ENCODE measurements at regions of chr11 and their contacts with region 1.

Region 1: DNA sequence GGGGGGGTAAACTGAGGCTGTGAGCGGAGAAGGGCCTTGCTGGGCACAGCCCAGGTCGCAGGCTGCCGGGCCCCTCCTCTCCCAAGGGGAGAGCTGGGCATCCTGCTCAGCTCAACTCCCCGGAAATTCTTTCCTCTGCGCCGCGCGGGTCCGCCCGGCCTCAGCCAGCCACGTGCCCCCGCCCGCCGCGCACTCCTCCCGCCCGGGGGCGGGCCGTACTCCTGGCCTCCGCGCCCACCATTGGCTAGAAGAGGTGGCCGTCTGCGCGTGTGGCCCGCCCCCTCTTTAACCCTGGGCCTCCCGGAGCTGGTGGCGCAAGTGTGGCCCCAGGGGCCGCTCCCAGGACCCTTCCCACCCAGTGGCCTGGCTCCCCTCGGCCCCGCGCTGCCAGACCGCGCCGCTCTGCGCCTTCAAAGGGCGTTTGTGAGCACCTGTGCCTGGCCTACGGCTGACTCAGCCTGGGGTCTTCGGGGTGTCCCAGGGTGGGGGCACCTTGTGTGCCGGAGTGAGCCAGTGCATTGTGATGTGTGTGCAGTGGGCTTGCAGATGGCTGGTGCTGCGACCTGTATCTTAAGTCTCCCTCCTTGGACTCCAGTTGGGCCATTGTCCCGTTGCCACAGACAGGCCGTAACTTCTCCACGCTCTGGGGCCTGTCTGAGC is 2.0 kb downstream of the MRGPRF start:
- DNase-seq: no peak
- H3K4me3 ChIP-seq: peak overlapping the region; percentile 51
- H3K27me3 ChIP-seq: no peaks in the 10 kb centered on the region
- CTCF ChIP-seq: no peak

Region 2: DNA sequence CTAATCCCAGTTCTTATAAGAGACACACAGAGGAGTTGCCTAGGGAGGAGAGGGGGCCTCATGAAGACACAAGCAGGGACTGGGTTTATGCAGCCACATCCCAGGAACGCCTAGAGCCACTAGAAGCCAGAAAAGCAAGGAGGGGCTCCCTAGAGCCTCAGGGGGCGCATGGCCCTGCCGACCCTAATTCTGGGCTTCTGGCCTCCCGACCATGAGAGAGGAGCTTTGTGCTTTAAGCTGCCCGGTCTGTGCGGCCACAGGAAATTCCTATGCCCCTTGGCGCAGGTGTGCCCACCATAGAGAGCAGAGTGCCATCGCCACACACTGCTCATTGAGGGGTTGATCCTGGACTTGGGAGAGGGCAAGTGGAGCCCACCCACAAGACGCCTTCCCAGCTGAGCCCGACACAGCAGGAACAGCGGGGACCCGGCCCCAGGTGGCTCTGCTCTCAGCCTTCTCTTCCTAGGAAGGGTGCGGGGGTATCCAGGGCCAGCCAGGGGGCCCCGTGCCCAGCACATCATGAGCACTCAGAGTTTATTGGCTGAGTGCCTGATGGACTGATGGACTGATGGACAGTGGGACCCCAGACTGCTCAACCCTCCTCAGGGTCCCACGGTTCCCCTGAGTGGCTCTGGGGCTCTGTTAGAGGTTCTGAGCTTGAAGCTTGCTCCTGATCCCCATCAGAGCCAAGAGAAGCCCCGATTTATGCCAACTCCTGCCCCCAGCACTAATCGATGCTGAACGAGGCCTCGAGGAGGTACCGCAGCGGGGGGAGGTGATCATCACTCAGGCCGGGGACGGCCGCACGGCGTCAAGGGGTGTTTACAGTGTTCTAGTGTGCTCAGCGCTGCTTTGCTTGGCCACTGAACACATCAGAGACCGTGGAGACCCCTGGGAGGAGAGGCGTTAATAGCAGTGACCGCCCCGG is 16.9 kb before region 1 on chr11:
- CTCF ChIA-PET with region 1: no interaction called
- POLR2A ChIA-PET with region 1: no interaction called
- DNase-seq: no peak
- H3K4me3 ChIP-seq: no peak overlapping the region
- H3K27me3 ChIP-seq: peaks cover 11% of the 10 kb centered on the region
- CTCF ChIP-seq: no peak

Region 3: DNA sequence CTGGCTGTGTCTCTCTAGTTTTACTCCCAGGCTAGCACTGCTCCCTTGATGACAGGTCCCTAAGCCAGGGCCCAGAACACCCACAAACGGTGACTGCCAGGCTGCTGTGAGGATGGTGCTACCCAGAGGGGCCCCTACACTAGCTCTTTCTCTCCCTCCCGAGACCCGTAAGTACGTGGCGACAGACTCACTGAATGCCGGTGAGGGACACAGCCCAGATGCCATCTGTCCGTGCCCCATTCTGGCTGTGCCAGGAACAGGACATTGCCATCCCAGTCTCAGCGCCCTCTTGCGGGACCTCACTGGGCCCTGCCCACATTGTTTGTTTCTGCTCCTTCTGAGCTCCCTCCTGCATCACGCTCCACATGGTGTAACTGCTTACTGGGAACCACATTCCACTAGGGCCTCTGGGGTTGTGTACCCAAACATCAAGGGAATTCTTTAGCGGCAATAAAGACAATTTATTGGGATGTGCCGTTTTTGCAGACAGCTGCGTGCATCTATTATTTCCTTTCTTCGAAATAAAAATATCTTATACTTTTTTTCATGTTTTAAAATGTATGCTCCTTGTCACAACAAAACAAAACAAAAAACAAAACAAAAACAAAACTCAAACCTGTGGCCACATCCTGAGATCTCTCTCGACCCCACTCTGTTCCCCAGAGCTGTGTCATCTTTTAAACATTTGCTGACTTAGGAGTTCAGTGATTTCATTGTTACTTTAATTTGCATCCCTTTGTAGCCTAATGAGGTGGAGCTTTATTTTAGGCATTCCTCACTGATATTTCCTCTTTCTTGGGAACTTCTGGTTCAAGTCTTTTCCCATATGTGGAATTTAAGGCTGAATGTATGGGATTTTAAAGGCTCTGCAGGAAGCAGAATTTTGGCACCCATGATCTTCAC is 33.3 kb after region 1 on chr11:
- CTCF ChIA-PET with region 1: interaction called, 54 read pairs
- POLR2A ChIA-PET with region 1: no interaction called
- DNase-seq: peak; percentile 66
- H3K4me3 ChIP-seq: no peak overlapping the region
- H3K27me3 ChIP-seq: no peaks in the 10 kb centered on the region
- CTCF ChIP-seq: peak; percentile 87

Region 4: DNA sequence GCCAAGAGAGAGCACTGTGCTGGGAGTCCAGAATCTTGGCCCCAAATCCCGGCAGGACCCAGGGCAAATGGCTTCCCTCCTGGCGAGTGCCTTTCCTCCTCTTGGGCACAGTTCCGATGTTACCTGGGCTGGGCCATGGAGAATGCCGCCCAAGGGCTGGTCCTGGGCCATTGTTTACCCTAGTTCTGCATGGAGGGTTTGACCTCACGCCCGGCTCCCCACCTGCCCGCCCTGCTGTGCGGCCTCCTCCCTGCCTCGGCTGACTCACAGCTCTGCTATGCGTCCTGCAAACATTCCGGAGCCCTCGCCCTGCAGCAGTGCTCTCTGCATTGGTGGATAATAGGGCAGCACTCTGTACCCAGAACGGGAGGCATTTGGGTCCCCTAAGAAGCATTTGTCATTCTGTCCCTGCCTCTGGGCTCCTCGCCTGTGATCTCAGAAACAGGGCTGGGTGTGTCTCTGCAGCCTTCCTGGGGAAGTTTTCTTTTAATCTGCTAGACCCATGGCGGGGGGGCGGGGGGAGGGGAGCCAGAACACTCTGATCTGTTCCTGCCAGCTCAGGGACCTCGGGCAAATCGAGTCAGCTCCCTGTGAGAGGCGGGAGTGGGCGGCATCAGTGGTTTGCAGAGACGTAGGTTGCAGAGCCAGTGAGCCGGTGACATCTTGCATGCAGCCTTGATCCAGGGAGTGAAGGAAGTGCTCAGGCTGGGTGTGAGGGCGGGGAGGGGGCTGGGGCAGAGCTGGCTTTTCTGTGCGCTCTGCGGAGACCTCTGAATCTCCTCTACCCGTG is 111.7 kb after region 1 on chr11:
- CTCF ChIA-PET with region 1: no interaction called
- POLR2A ChIA-PET with region 1: no interaction called
- DNase-seq: no peak
- H3K4me3 ChIP-seq: no peak overlapping the region
- H3K27me3 ChIP-seq: no peaks in the 10 kb centered on the region
- CTCF ChIP-seq: no peak

Measured in BJ (cell line).